HepG2 (cell line): ENCODE measurements at regions of chr1 and their contacts with region 1.

Region 1: GRCh38 chr1:98053471-98054366 is 132.9 kb upstream of the DPYD start:
- DNase-seq: peak; percentile 1
- ATAC-seq: peak; percentile 100
- H3K4me3 ChIP-seq: peak overlapping the region; percentile 31 to 67 (median 44); a peak in 4 of 6 replicates
- H3K27ac ChIP-seq: no peak overlapping the region
- H3K4me1 ChIP-seq: peaks cover 10% of the 10 kb centered on the region; the same call in 1 of the 2 replicates
- H3K27me3 ChIP-seq: peaks cover 3 to 16% of the 10 kb centered on the region in 2 experiments; a peak in 3 of 5 replicates
- CTCF ChIP-seq: peak; percentile 76
- EP300 ChIP-seq: no peak
- POLR2A ChIP-seq: no peak
- RAD21 ChIP-seq: peak; percentile 76

Region 2: GRCh38 chr1:96872757-96873156 is 1181.0 kb before region 1 on chr1:
- CTCF ChIA-PET with region 1: no interaction called
- POLR2A ChIA-PET with region 1: no interaction called
- in situ Hi-C with region 1: no loop called
- intact Hi-C with region 1: loop called (anchors 10 kb)
- DNase-seq: no peak
- ATAC-seq: peak; percentile 40; the same call in 1 of the 3 replicates
- H3K4me3 ChIP-seq: no peak overlapping the region
- H3K27ac ChIP-seq: no peak overlapping the region
- H3K4me1 ChIP-seq: no peaks in the 10 kb centered on the region
- H3K27me3 ChIP-seq: no peaks in the 10 kb centered on the region
- CTCF ChIP-seq: 0 out of 2 replicates have a peak, but pooled peaks have one; percentile 8
- EP300 ChIP-seq: no peak
- POLR2A ChIP-seq: no peak
- RAD21 ChIP-seq: no peak

Region 3: GRCh38 chr1:97137862-97138514 is 915.7 kb before region 1 on chr1:
- CTCF ChIA-PET with region 1: no interaction called
- POLR2A ChIA-PET with region 1: no interaction called
- in situ Hi-C with region 1: no loop called
- intact Hi-C with region 1: loop called (anchors 2 kb)
- DNase-seq: peak; percentile 22
- ATAC-seq: peak; percentile 92
- H3K4me3 ChIP-seq: no peak overlapping the region
- H3K27ac ChIP-seq: no peak overlapping the region
- H3K4me1 ChIP-seq: no peaks in the 10 kb centered on the region
- H3K27me3 ChIP-seq: no peaks in the 10 kb centered on the region
- CTCF ChIP-seq: peak; percentile 54
- EP300 ChIP-seq: no peak
- POLR2A ChIP-seq: no peak
- RAD21 ChIP-seq: no peak

Region 4: DNA sequence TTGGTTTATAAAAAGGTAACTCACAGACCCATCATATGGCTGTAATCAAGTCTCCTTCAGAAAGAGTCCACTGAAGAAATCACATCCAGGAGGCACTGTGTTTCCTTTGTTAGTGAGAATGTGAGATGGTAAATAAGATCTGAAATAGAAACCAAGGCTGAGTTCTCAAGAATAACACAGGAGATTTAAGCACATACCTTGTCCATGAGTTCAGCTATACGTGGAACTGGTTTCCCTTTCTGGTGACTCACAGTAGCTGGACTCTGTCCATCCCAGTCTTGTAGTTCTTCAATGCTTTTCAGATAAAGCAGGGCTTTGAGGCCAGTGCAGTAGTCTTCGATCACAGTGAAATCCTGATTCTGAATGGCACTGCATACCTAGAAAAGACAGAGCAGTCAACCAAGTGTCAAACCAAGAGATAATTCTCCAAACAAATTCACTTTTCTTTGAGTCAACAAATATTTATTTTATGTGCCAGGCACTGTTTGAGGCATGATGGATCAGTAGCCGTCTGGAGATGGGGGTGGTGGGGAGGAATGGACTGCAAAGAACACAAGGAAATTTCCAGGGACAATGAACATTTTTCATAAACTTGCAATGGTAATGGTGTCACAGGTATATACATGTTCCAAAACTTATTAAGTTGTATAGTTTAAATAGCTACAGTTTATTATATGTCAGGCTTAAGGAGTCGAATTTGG is 860.7 kb before region 1 on chr1:
- CTCF ChIA-PET with region 1: no interaction called
- POLR2A ChIA-PET with region 1: no interaction called
- in situ Hi-C with region 1: loop called (anchors 25 kb)
- intact Hi-C with region 1: loop called (anchors 5 kb)
- DNase-seq: no peak
- ATAC-seq: no peak
- H3K4me3 ChIP-seq: no peak overlapping the region
- H3K27ac ChIP-seq: no peak overlapping the region
- H3K4me1 ChIP-seq: no peaks in the 10 kb centered on the region
- H3K27me3 ChIP-seq: no peaks in the 10 kb centered on the region; a peak in 1 of 5 replicates
- CTCF ChIP-seq: no peak
- EP300 ChIP-seq: no peak
- POLR2A ChIP-seq: no peak
- RAD21 ChIP-seq: no peak

Region 5: DNA sequence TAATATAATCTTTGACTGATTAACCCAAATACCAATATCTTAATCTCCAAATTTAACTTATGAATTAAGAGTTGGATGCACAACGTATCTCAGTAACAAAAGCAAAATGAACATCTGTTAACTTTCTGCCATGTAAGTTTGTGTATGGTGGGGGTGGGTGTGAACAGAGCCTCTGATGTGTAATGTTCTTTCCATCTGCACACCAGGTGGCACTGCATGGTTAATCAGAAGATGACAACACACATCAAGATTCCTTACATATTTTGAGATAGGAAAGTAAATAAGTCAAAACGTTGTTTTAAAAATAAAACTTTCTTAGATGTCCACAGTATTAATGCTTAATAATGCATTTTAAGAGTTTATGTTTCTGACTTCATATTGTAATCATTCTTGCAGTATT is 384.8 kb before region 1 on chr1:
- CTCF ChIA-PET with region 1: no interaction called
- POLR2A ChIA-PET with region 1: no interaction called
- in situ Hi-C with region 1: no loop called
- intact Hi-C with region 1: loop called (anchors 5 kb)
- DNase-seq: no peak
- ATAC-seq: no peak
- H3K4me3 ChIP-seq: no peak overlapping the region
- H3K27ac ChIP-seq: no peak overlapping the region
- H3K4me1 ChIP-seq: no peaks in the 10 kb centered on the region
- H3K27me3 ChIP-seq: no peaks in the 10 kb centered on the region
- CTCF ChIP-seq: no peak
- EP300 ChIP-seq: no peak
- POLR2A ChIP-seq: no peak
- RAD21 ChIP-seq: no peak

Region 6: GRCh38 chr1:98001764-98002163 is 52.0 kb before region 1 on chr1:
- CTCF ChIA-PET with region 1: no interaction called
- POLR2A ChIA-PET with region 1: no interaction called
- in situ Hi-C with region 1: no loop called
- intact Hi-C with region 1: loop called (anchors 2 kb)
- DNase-seq: no peak
- ATAC-seq: no peak
- H3K4me3 ChIP-seq: no peak overlapping the region
- H3K27ac ChIP-seq: no peak overlapping the region
- H3K4me1 ChIP-seq: no peaks in the 10 kb centered on the region
- H3K27me3 ChIP-seq: no peaks in the 10 kb centered on the region
- CTCF ChIP-seq: no peak
- EP300 ChIP-seq: no peak
- POLR2A ChIP-seq: no peak
- RAD21 ChIP-seq: no peak

Region 7: DNA sequence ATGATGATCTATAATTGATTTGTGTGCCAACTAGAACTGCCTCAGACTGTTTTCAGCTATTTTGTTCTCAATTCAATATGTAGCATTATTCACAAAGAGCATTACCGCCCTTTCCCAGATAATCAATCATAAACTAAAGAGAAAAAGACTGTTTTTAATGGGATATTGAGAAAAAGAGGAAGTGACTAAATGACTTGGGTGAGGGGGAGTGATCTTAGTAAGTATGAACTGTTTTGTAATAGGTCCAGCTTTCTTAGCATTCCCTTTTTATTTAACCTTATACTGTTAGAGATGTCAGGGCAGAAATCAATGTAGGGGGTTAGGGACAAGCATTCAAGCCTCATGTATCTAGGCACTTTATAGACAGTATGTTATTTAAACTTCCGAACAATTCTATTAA is 24.9 kb after region 1 on chr1:
- CTCF ChIA-PET with region 1: no interaction called
- POLR2A ChIA-PET with region 1: no interaction called
- in situ Hi-C with region 1: no loop called
- intact Hi-C with region 1: no loop called
- DNase-seq: no peak
- ATAC-seq: no peak
- H3K4me3 ChIP-seq: no peak overlapping the region
- H3K27ac ChIP-seq: no peak overlapping the region
- H3K4me1 ChIP-seq: no peaks in the 10 kb centered on the region
- H3K27me3 ChIP-seq: no peaks in the 10 kb centered on the region
- CTCF ChIP-seq: no peak
- EP300 ChIP-seq: no peak
- POLR2A ChIP-seq: no peak
- RAD21 ChIP-seq: no peak